Panc1 (cell line): ENCODE measurements at regions of chr9 and their contacts with region 1.

Region 1: DNA sequence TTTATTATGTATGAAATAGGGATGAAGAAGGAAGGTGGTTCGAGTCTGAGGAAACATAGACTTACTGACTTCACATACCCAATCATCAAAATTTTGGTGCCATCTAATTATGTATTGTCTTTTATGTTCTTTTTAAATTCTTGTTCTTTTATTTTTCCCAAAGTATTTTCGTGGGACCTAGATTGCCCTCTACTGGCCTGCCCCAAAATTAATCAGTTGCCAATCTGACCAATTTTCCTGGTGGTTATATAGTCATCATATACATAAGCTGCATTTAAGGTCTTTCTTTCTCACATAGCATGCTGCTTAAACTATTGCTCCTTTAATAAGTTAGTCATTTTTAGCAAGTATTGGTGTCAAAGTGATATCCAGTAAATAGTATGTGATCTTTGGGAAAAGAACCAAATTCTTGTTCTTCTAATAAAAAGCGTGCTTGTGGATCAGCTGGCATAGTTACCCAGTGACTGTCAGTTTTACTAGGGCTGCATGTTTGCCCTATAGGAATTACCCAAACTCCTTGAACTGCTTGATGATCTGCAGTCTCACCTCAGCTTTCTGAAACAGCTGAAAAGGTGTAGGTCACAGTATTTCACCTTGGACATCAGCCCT is 223.5 kb downstream of the SH3GL2 start:
- DNase-seq: no peak
- ATAC-seq: no peak
- H3K4me3 ChIP-seq: no peak overlapping the region
- H3K27ac ChIP-seq: no peak overlapping the region
- H3K4me1 ChIP-seq: no peaks in the 10 kb centered on the region
- H3K27me3 ChIP-seq: no peaks in the 10 kb centered on the region
- CTCF ChIP-seq: peak; percentile 23; the same call in 1 of the 2 replicates

Region 2: DNA sequence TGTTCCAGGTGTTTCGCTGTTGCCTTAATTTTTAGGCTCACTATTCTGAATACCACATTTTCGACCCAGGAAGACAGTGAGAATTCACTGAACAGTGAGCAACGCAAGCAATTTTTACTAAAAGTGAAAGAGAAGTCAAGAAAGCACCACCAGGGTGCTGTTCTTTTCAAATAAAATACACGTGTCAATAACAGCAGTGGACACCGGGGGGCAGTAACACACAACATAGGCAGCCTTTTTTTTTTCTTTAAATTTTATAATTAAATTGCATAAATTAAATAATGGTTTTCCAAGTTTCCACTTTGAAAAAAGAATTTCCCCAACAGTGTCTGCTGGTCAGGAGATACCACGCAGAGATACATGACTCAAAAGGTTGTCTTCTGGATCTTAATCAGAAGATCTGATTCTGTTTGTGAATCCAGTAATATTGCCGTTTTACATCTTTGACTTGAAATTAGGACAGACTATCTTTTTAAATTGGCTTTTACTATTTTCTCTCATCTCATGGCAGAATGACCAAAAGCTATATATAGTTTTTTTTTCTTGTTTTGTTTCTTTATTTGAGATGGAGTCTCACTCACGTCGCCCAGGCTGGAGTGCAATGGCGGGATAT is 270.6 kb before region 1 on chr9:
- CTCF ChIA-PET with region 1: no interaction called
- POLR2A ChIA-PET with region 1: no interaction called
- in situ Hi-C with region 1: no loop called
- intact Hi-C with region 1: loop called (anchors 5 kb)
- DNase-seq: peak; percentile 7
- ATAC-seq: no peak
- H3K4me3 ChIP-seq: no peak overlapping the region
- H3K27ac ChIP-seq: no peak overlapping the region
- H3K4me1 ChIP-seq: no peaks in the 10 kb centered on the region
- H3K27me3 ChIP-seq: no peaks in the 10 kb centered on the region; the same call in 1 of the 2 replicates
- CTCF ChIP-seq: peak; percentile 56